ENCODE measurements at regions of chr19 and their contacts with region 1.

Region 1: DNA sequence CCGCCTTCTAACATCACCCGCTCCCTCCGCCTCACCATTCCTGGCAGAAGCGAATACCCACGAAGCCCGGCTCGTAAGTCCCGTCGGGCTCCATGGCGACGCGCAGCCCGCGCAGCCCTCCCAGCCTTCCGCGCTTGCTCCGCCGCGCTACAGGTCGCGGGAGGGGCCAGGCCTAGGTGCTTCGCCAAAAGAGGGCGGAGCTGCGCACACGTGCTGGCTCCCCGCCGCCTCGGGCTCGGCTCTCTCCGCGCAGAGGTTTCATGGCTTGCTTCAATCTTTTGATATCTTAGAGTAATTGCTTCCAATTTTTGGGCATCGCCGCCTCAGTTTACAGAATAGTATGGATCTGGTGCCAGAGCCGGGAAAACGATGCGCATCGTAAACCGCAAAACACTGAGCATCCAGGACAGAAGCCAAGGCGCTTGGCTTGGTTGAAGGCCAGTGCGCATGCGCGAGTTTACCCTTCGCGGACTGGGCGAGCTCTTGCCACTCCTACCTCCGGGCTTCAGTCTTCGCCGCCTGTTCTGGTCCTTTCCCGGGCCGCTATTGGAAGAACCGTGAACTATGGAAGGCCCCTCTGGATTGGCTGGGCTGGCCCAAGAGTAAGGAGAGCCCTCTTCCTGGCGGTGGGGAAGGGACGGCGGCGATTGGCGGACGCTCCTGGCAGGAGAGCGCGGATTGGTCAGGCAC is at the start of gene POLR2I:
- DNase-seq: peak; percentile 98 to 100 (median 100)

Region 2: GRCh38 chr19:35995048-35995993 is 119.6 kb before region 1 on chr19 and contains the start of gene SDHAF1:
- intact Hi-C with region 1: no loop called
- DNase-seq: peak; percentile 95 to 99 (median 98)

Region 3: DNA sequence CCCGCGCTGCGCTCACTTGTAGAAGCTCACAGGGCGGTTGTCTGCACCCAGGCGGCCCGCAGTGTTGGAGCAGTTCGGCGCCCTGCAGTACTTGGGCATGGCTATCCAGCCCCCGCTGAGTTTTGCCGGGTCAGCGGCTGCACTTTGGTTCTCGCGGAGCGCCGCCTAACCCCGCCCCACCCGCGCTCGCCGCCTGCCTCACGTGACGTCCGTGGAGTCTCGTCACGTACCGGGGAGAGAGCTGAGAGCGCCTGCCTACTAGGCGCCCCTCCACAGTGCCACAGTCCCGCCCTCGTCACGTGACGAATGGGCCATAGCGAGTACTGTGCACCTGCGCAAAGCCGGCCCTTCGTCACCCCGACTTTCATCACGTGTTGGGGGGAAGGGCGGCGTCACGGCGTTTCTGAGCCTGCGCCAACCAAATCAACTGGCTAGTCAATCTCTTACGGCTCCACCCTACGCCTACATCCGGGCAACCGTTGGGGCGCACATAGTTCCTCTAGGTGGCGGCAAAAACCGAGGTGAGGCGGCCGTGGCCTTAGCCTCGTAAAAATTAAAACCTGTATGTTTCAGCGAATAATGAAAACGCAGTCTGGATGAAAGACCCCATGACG is 60.7 kb before region 1 on chr19 and contains the start of gene THAP8:
- intact Hi-C with region 1: loop called (anchors 2 kb)
- DNase-seq: peak; percentile 97 to 100 (median 99)

Region 4: DNA sequence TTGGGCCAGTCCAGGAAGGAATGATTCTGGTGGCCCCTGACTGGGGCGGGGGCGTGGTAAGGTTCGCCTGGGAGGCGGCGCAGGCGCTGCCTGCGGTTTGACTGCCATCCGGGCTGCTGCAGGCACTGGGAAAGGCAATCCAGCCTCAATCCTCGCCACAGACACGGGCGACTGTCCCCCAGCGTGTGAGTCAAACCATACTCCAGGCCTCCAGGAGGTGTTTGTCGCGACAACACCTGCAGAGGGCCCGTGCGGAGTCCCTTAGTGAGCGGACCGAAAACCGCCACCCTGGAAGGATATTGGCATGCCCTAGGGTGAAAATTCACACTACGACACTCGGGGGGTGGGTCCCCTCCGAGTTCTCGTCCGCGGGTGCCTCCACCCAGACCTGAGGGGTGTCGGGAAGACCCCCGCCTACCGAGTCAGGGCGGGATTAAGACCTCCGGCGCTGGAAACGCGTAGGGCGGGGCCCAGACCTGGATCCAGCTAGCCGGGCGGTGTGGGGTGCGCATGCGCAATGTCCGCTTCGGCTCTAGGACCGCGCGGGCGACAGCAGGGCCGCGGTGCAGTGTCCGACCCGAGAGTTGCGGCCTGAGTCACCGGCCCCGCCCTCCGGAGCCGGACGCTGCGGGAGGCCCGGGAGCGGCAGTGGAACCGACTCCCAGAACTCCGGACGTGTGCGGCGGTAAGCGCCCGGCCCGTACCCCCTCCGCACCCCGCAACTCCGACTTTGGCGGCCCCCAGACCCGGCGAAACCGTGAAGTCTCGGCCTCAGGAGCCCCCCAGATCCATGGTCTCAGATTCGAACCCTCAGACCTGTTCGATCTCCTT is 24.8 kb after region 1 on chr19 and contains the start of gene CAPNS1:
- intact Hi-C with region 1: loop called (anchors 1 kb)
- DNase-seq: peak; percentile 94 to 99 (median 98)